ENCODE measurements at regions of chr1 and their contacts with region 1.

Region 1: GRCh38 chr1:8026153-8026975 is at the start of gene ERRFI1:
- DNase-seq: peak; percentile 88
- H3K4me3 Mint-ChIP-seq: peak within 1 kb of the TSS; percentile 63
- H3K27ac Mint-ChIP-seq: no peak within 1 kb of the TSS
- H3K4me1 Mint-ChIP-seq: peaks cover 13% of the 10 kb centered on the region
- H3K27me3 Mint-ChIP-seq: peaks cover 65% of the 10 kb centered on the region

Region 2: GRCh38 chr1:7831458-7831857 is 194.9 kb before region 1 on chr1:
- CTCF ChIA-PET with region 1: no interaction called
- DNase-seq: no peak
- H3K4me3 Mint-ChIP-seq: no peak overlapping the region
- H3K27ac Mint-ChIP-seq: no peak overlapping the region
- H3K4me1 Mint-ChIP-seq: peaks cover under 1% of the 10 kb centered on the region
- H3K27me3 Mint-ChIP-seq: no peaks in the 10 kb centered on the region

Region 3: GRCh38 chr1:8047681-8048445 is 21.5 kb after region 1 on chr1:
- CTCF ChIA-PET with region 1: no interaction called
- DNase-seq: no peak
- H3K4me3 Mint-ChIP-seq: no peak overlapping the region
- H3K27ac Mint-ChIP-seq: no peak overlapping the region
- H3K4me1 Mint-ChIP-seq: no peaks in the 10 kb centered on the region
- H3K27me3 Mint-ChIP-seq: peaks cover 10% of the 10 kb centered on the region

Region 4: GRCh38 chr1:8226747-8227146 is 200.4 kb after region 1 on chr1:
- CTCF ChIA-PET with region 1: no interaction called
- DNase-seq: no peak
- H3K4me3 Mint-ChIP-seq: no peak overlapping the region
- H3K27ac Mint-ChIP-seq: no peak overlapping the region
- H3K4me1 Mint-ChIP-seq: peaks cover 12% of the 10 kb centered on the region
- H3K27me3 Mint-ChIP-seq: peaks cover 65% of the 10 kb centered on the region

Region 5: GRCh38 chr1:8314346-8315280 is 288.2 kb after region 1 on chr1:
- CTCF ChIA-PET with region 1: interaction called, 39 read pairs
- DNase-seq: peak; percentile 66
- H3K4me3 Mint-ChIP-seq: no peak overlapping the region
- H3K27ac Mint-ChIP-seq: no peak overlapping the region
- H3K4me1 Mint-ChIP-seq: peaks cover 24% of the 10 kb centered on the region
- H3K27me3 Mint-ChIP-seq: peaks cover 59% of the 10 kb centered on the region

Region 6: DNA sequence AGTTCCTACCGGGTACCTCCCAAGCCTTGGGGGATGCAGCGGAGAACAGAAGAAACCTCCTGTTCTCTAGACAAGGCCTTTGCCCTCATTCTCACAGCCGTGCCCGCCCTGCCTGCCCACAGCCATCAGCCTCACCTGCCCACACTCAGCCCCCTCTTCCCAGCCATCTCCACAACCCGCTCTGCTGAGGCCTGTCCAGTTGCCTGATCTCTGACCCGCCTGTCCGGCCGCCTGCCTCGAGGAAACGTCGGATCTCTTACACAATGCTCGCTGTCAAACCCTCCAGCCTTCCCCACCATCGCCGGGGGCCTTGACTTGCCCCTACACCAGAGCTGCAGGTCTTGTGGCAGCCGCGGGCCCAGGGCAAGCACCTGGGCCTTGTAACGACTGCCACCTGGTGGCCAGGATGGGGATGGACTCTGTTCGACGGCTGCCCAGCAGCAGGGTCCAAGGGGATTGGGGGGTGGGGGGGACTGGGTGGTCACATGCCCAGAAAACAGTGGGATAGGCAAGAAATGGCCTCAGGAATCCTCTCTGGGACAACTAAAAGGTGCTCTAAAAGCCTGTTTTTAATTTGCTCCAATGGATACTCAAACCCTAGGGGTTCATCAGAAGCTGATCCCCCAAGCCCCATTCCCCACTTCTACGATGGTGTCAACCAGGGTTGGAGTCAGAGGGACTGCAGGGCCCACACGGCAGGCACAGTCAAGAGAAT is 322.6 kb after region 1 on chr1:
- CTCF ChIA-PET with region 1: interaction called, 18 read pairs
- DNase-seq: peak; percentile 78
- H3K4me3 Mint-ChIP-seq: no peak overlapping the region
- H3K27ac Mint-ChIP-seq: no peak overlapping the region
- H3K4me1 Mint-ChIP-seq: no peaks in the 10 kb centered on the region
- H3K27me3 Mint-ChIP-seq: peaks cover 13% of the 10 kb centered on the region

Measured in activated naive CD4-positive, alpha-beta T cell treated with anti-CD3 and anti-CD28 coated beads, Interleukin-2, amount 10 ng/mL, durations not matched to agents 7 days and 5 days (primary cell).